ENCODE measurements at regions of chr4 and their contacts with region 1.

Region 1: DNA sequence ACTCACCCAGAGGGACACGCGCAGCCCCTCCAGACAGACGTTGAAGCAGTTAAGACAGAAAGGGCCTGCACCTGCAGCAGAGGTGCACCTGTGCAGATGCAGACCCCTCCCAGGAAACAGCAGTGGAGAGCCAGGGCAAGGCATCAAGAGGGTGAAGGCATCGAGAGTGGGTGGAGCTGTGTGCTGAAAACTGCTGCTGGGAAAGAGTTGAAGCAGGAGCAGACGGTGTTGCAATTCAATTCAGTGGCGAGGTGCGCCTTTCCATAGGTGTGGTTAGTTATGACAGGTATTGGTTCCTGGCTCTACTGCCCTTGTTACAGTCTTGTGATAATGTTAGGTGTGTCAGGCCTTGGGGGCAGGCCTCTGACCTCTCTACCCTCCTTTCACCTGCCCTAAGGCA is 16.7 kb downstream of the LETM1 start:
- DNase-seq: no peak

Region 2: DNA sequence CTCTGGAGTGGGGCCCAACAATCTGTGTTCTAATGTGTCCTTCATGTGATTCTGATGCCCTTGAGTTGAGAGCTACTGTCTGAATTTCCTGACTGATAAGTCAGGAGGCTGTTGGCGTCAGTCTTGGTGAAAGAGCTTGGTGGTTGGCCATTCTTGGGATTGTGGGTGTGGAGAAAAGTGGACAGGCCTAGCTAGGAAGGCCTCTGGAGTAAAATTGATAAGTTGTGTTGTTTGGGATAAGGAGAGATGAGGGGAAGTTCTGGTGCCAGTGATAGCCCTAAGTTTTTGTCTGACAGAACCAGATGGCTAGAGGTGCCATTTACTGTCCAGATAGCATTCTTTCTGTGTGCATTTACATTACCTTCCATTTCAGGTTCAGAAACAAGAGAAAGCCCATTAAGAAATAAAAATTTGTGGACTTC is 43.6 kb after region 1 on chr4:
- intact Hi-C with region 1: loop called in 1 of 2 experiments (anchors 1 kb)
- DNase-seq: no peak

Region 3: GRCh38 chr4:1958276-1959103 is 119.2 kb after region 1 on chr4:
- intact Hi-C with region 1: no loop called
- DNase-seq: peak; percentile 69

Measured in posterior vena cava (tissue), 2 donors.